Uterus (tissue), 4 donors: ENCODE measurements at regions of chr17 and their contacts with region 1.

Region 1: GRCh38 chr17:21126645-21127510 is at the start of gene DHRS7B:
- DNase-seq: peak; percentile 95 to 96
- H3K4me3 ChIP-seq: peak within 1 kb of the TSS; percentile 71 to 99
- H3K27ac ChIP-seq: peak within 1 kb of the TSS; percentile 76 to 92
- H3K4me1 ChIP-seq: no peaks in the 10 kb centered on the region
- H3K27me3 ChIP-seq: no peaks in the 10 kb centered on the region
- CTCF ChIP-seq: peak in 1 of 4 experiments; percentile 1
- POLR2A ChIP-seq: peak in 1 of 2 donors; percentile 74
- total RNA-seq, gene DHRS7B: 21.5 to 42.6 (median 30.0) TPM

Region 2: DNA sequence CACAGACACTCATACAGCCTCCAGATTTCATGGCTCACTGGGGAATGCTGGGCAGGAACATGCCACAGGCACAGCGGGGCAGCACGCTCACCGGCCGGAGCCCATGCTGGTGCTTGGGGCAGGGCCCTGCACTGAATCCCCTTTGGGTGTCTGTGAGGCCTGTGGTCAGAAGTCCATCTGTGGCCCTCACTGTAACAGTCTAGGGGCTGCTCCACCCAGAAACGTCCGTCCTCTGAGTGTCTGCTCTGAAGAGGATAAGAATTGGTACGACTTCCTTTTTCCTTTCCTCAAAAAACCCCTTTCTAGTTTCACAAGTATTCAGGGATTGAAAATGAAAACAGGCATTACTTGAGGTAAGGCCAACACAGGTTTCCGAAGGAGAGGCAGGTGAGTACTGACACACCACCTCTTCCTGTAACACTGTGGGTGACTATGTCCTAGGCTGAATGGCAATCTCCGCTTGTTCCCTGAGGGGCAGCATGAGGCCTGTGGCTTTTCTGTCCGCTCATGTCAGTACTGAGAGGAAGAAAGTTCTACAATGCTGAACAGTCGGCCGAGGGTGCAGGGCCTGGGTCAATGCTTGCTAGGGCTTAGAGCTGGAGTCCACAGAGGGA is 44.5 kb after region 1 on chr17:
- intact Hi-C with region 1: no loop called
- DNase-seq: no peak
- H3K4me3 ChIP-seq: no peak overlapping the region
- H3K27ac ChIP-seq: peak overlapping the region in 1 of 2 donors; percentile 53
- H3K4me1 ChIP-seq: peaks cover 0 to 8% of the 10 kb centered on the region in 2 donors
- H3K27me3 ChIP-seq: no peaks in the 10 kb centered on the region
- CTCF ChIP-seq: no peak
- POLR2A ChIP-seq: no peak

Region 3: DNA sequence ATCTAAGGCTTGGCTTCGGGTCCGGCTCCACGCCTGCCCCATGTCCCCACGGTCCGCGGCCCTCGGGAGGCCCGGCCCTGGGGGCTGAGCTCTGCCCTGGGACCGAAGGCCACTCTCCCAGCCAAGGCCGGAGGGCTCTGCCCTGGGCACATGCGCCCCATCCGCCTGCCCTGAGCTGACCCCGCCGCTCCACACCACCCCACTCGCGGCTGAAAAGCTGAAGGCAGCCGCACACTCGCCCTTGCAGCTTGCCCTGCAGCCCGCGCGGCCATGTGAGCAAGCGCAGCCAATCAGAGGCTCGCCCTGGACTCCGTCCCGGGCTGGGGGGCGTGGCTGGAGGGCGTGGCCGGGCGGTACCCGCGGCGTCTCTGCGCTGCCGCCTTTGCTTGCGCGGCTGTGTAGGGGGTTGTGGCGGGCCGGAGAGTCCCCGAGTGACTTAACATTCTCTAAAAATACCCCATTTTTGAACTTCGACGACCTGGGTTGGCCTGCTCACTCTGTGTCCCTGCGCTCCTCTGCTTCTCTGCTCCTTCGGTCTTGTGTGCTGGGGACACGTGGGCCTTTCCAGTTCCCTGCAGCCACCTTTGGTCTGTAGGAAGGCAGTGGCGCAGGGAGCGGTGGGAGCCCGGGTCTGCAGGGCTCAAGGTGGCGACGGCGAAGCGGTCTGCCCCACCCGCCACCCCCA is 148.8 kb after region 1 on chr17:
- intact Hi-C with region 1: loop called (anchors 10 kb)
- DNase-seq: peak; percentile 88 to 93
- H3K4me3 ChIP-seq: peak overlapping the region; percentile 36 to 54
- H3K27ac ChIP-seq: peak overlapping the region; percentile 42 to 50
- H3K4me1 ChIP-seq: peaks cover 0 to 13% of the 10 kb centered on the region in 2 donors
- H3K27me3 ChIP-seq: no peaks in the 10 kb centered on the region
- CTCF ChIP-seq: peak in 1 of 4 experiments; percentile 9
- POLR2A ChIP-seq: peak in 1 of 2 donors; percentile 53